ENCODE measurements at regions of chr1 and their contacts with region 1.

Region 1: DNA sequence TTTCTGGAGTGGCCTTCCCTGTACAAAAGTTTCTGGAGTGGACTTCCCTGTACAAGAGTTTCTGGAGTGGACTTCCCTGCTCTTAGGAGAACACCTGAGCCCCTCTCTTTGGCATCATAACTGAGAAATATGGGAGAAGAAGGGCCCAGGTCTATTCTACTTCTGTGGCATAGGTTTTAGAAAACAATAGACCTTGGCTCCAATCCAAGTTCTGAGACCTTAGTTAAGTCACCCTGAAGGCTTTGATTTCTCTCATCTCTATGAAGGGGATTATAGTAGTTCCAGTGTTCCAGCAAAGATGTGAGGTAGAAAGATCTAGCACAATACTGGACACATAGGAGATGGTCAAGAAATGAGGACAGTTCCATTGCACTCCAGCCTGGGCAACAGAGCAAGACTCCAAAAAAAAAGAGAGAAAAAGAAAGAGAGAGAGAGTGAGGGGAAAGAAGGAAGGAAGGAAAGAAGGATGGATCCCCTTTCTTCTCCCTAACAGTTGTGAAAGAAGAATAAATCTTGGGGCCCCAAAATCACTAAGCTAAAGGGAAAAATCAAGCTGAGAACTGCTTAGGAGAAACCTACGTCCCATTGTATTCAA is 13.3 kb upstream of the EIF4G3 start:
- DNase-seq: no peak
- ATAC-seq: no peak
- H3K4me3 ChIP-seq: no peak overlapping the region
- H3K27ac ChIP-seq: no peak overlapping the region
- H3K4me1 ChIP-seq: no peaks in the 10 kb centered on the region
- H3K27me3 ChIP-seq: no peaks in the 10 kb centered on the region

Region 2: DNA sequence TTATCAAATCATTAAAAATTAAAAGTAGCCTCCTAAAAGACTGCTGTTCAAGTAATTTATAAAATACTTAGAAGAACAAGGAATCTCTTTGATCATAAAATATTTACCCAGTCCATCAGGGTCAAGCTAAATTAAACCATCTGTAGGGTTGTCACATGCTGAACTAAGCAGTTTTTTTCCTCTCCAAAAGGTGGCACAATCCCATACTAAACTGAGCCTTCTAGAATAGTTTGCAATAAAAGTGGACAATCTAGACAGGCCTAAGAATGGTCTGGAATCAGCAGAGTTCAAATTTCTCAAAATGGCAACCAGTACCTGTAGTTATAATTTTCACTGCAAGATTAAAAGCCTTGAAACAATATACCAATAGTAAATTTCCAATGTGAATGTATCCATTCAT is 208.1 kb before region 1 on chr1:
- intact Hi-C with region 1: loop called in 3 of 4 experiments (anchors 5 to 10 kb)
- DNase-seq: no peak
- ATAC-seq: peak; percentile 58 to 71
- H3K4me3 ChIP-seq: no peak overlapping the region
- H3K27ac ChIP-seq: no peak overlapping the region
- H3K4me1 ChIP-seq: no peaks in the 10 kb centered on the region
- H3K27me3 ChIP-seq: no peaks in the 10 kb centered on the region

Region 3: DNA sequence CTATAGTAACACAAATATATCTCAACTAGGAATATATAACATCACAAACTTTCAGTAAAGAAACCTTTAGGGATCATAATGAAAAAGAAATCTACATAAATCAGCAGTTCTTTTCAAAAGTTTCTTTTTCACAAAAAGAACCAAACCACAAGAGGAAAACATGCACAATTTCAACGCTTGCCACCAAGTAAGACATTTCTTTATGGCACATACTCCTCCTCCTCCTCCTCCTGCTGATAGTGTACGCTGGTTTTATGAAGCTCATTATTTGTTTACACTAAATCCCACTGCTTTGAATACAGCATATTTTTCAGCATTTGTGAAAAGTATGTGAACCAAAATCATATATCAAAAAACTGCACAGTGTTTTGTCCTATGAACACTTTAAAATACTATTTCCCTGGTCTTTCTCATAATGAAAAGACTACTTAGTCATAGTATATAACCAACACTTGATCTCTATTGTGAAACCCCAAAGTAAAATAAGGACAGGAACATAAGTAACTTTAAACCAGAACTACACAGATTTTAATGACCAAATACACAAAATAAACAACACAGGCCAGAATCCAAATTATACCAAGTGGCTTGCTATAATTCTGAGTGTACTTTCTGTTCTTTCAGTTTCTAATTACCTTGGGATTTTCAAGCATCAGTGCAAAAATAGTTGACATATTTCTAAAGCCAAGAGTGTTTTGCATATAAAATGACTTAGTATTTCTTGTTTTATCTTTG is 197.5 kb before region 1 on chr1:
- intact Hi-C with region 1: loop called in 3 of 4 experiments (anchors 10 kb)
- DNase-seq: no peak
- ATAC-seq: no peak
- H3K4me3 ChIP-seq: no peak overlapping the region
- H3K27ac ChIP-seq: no peak overlapping the region
- H3K4me1 ChIP-seq: no peaks in the 10 kb centered on the region
- H3K27me3 ChIP-seq: no peaks in the 10 kb centered on the region

Region 4: GRCh38 chr1:21255278-21255942 is 65.4 kb after region 1 on chr1:
- intact Hi-C with region 1: no loop called
- DNase-seq: peak; percentile 91 to 97 (median 95)
- ATAC-seq: peak; percentile 75 to 80
- H3K4me3 ChIP-seq: no peak overlapping the region
- H3K27ac ChIP-seq: peak overlapping the region; percentile 5
- H3K4me1 ChIP-seq: peaks cover 2% of the 10 kb centered on the region
- H3K27me3 ChIP-seq: no peaks in the 10 kb centered on the region

Measured in right cardiac atrium (tissue), 5 donors.